CD8-positive, alpha-beta memory T cell (primary cell): ENCODE measurements at regions of chr18 and their contacts with region 1.

Region 1: GRCh38 chr18:79378542-79379250 is 17.0 kb upstream of the NFATC1 start:
- DNase-seq: peak; percentile 74 to 82 (median 76)
- H3K4me3 ChIP-seq: no peak overlapping the region
- H3K4me3 Mint-ChIP-seq: peak overlapping the region in 1 of 7 donors; percentile 15
- H3K27ac ChIP-seq: no peak overlapping the region
- H3K27ac Mint-ChIP-seq: peak overlapping the region in 7 of 8 donors; percentile 20 to 76 (median 68)
- H3K4me1 ChIP-seq: peaks cover 6% of the 10 kb centered on the region
- H3K4me1 Mint-ChIP-seq: peaks cover 9 to 10% (median 9%) of the 10 kb centered on the region in 3 donors
- H3K27me3 ChIP-seq: no peaks in the 10 kb centered on the region
- H3K27me3 Mint-ChIP-seq: peaks cover 0 to 2% of the 10 kb centered on the region in 2 donors

Region 2: DNA sequence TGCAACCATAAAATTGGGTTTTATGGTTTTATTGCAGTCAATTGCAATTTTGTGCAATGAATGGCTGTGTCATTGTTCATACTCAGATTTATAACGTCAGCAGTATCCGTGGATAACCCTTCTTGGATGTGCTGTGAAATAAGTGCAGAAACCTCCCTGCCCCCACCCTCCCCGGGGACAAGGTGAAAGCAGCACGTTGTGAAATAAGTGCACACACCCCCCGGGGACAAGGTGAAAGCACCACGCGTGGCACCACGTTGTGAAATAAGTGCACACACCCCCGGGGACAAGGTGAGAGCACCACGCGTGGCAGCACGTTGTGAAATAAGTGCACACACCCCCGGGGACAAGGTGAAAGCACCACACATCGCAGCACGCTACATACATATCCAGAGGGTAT is 76.6 kb before region 1 on chr18:
- CTCF ChIA-PET with region 1: no interaction called
- POLR2A ChIA-PET with region 1: no interaction called
- DNase-seq: no peak
- H3K4me3 ChIP-seq: no peak overlapping the region
- H3K4me3 Mint-ChIP-seq: no peak overlapping the region
- H3K27ac ChIP-seq: no peak overlapping the region
- H3K27ac Mint-ChIP-seq: no peak overlapping the region
- H3K4me1 ChIP-seq: no peaks in the 10 kb centered on the region
- H3K4me1 Mint-ChIP-seq: no peaks in the 10 kb centered on the region
- H3K27me3 ChIP-seq: no peaks in the 10 kb centered on the region
- H3K27me3 Mint-ChIP-seq: no peaks in the 10 kb centered on the region

Region 3: GRCh38 chr18:79393635-79394533 is 15.2 kb after region 1 on chr18:
- CTCF ChIA-PET with region 1: interaction called, 49 read pairs
- POLR2A ChIA-PET with region 1: no interaction called
- DNase-seq: peak in 4 of 5 donors; percentile 37 to 73 (median 44)
- H3K4me3 ChIP-seq: peak overlapping the region; percentile 55
- H3K4me3 Mint-ChIP-seq: peak overlapping the region; percentile 80 to 93 (median 86)
- H3K27ac ChIP-seq: no peak overlapping the region
- H3K27ac Mint-ChIP-seq: peak overlapping the region in 6 of 8 donors; percentile 53 to 90 (median 76)
- H3K4me1 ChIP-seq: peaks cover 20% of the 10 kb centered on the region
- H3K4me1 Mint-ChIP-seq: peaks cover 12 to 31% (median 28%) of the 10 kb centered on the region in 3 donors
- H3K27me3 ChIP-seq: peaks cover 6% of the 10 kb centered on the region
- H3K27me3 Mint-ChIP-seq: peaks cover 19% of the 10 kb centered on the region in 2 donors

Region 4: DNA sequence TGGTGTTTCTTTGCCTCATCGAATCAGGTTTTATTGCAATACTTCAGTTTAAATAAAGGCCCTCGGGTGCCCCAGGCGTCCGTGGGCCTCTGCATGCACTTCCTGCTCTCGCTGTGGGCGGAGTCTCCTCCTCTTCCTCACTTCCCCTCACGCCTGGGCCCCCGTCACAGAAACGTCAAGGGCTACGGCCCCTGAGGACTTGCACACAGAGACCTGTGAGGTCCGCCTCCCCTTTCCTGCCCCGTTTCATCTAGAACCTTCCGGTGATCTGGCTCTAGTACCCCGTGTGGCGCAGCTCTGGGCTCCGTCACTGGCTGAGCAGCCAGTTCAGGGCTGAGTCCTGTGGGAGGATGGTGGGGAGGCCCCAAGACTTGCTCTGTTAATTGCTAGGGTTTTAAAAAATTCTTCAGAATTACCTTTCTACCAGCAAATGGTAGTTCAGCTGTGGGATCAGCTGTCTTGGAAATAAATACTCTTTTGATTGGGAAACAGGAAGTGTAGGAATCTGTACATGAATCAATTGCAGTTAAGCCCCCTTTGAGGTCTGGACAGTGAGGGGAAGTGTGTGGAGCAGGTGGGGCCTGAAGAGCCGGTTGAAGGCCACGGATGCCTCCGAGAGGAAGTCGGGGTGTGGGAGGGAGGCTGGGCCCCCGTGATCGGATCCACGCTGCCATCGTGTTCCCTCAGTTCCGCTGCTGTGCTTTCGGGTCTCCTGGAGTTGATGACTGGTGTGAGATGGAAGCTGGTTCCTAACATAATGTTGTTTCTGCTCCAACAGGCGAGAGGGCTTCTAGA is 27.3 kb after region 1 on chr18:
- CTCF ChIA-PET with region 1: interaction called, 20 read pairs
- POLR2A ChIA-PET with region 1: no interaction called
- DNase-seq: peak; percentile 81 to 94 (median 90)
- H3K4me3 ChIP-seq: peak overlapping the region; percentile 59
- H3K4me3 Mint-ChIP-seq: peak overlapping the region; percentile 59 to 89 (median 79)
- H3K27ac ChIP-seq: peak overlapping the region; percentile 83
- H3K27ac Mint-ChIP-seq: peak overlapping the region; percentile 88 to 99 (median 96)
- H3K4me1 ChIP-seq: peaks cover 60% of the 10 kb centered on the region
- H3K4me1 Mint-ChIP-seq: peaks cover 46 to 58% (median 57%) of the 10 kb centered on the region in 3 donors
- H3K27me3 ChIP-seq: no peaks in the 10 kb centered on the region
- H3K27me3 Mint-ChIP-seq: no peaks in the 10 kb centered on the region

Region 5: GRCh38 chr18:79523736-79524180 is 145.1 kb after region 1 on chr18:
- CTCF ChIA-PET with region 1: interaction called, 105 read pairs
- POLR2A ChIA-PET with region 1: no interaction called
- DNase-seq: peak; percentile 59 to 90 (median 82)
- H3K4me3 ChIP-seq: peak overlapping the region; percentile 75
- H3K4me3 Mint-ChIP-seq: peak overlapping the region; percentile 62 to 93 (median 85)
- H3K27ac ChIP-seq: peak overlapping the region; percentile 43
- H3K27ac Mint-ChIP-seq: peak overlapping the region; percentile 92 to 98 (median 96)
- H3K4me1 ChIP-seq: peaks cover 61% of the 10 kb centered on the region
- H3K4me1 Mint-ChIP-seq: peaks cover 45 to 70% (median 57%) of the 10 kb centered on the region in 3 donors
- H3K27me3 ChIP-seq: no peaks in the 10 kb centered on the region
- H3K27me3 Mint-ChIP-seq: no peaks in the 10 kb centered on the region

Region 6: GRCh38 chr18:79528846-79529245 is 150.2 kb after region 1 on chr18:
- CTCF ChIA-PET with region 1: interaction called, 105 read pairs
- POLR2A ChIA-PET with region 1: no interaction called
- DNase-seq: peak; percentile 55 to 77 (median 60)
- H3K4me3 ChIP-seq: no peak overlapping the region
- H3K4me3 Mint-ChIP-seq: no peak overlapping the region
- H3K27ac ChIP-seq: no peak overlapping the region
- H3K27ac Mint-ChIP-seq: peak overlapping the region in 3 of 8 donors; percentile 42 to 71 (median 60)
- H3K4me1 ChIP-seq: peaks cover 15% of the 10 kb centered on the region
- H3K4me1 Mint-ChIP-seq: peaks cover 10 to 22% (median 13%) of the 10 kb centered on the region in 3 donors
- H3K27me3 ChIP-seq: no peaks in the 10 kb centered on the region
- H3K27me3 Mint-ChIP-seq: peaks cover 0 to 2% of the 10 kb centered on the region in 2 donors

Region 7: DNA sequence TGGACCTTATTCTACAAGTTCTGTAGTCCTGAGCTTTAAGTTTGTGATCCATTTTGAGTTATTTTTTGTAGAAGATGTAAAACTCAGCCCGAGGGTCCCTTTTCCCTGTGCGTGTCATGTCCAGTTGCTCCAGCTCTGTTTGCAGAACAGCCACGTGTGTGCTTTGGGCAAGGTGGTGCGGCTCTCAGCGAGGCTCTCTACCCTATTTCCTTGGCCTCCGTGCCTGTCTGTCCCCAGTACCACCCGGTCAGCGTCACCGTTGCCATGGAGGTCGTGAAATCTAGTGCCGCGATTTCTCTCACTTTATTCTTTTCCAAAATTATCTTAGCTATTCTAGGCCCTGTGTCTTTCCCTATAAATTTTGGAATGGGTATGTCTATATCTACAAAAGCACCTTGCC is 159.9 kb after region 1 on chr18:
- CTCF ChIA-PET with region 1: interaction called, 11 read pairs
- POLR2A ChIA-PET with region 1: no interaction called
- DNase-seq: no peak
- H3K4me3 ChIP-seq: no peak overlapping the region
- H3K4me3 Mint-ChIP-seq: no peak overlapping the region
- H3K27ac ChIP-seq: no peak overlapping the region
- H3K27ac Mint-ChIP-seq: no peak overlapping the region
- H3K4me1 ChIP-seq: no peaks in the 10 kb centered on the region
- H3K4me1 Mint-ChIP-seq: no peaks in the 10 kb centered on the region
- H3K27me3 ChIP-seq: no peaks in the 10 kb centered on the region
- H3K27me3 Mint-ChIP-seq: peaks cover 0 to 8% of the 10 kb centered on the region in 2 donors

Region 8: DNA sequence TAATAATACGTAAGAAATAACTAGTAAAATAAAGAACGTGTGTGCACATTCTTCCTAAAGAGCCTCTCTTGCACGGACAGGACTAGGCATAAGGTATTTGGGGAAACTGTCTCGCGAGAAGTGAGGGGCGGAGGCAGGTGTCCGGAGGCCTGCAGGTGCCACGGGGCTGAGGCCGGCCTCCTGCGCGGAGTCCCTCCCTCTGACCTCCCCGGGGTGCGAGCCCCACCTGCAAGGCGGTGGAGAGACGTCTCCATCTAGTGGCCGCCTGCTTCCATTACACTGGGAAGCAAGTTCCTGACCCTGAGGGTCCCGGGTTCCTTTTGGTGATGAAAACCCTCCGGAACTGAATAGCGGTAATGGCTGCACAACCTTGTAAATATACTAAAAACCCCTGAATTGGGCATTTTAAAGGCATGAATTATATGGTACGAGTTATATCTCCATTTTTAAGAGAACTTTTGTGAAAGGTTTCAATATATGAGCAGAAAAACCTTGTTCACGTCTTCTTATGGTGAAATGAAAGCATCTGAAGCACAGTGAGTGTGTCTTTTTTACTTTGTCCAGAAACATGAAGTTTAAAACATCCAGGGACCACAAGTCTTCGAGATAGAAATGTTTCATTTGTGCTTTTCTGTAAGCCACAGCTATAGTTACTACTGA is 265.4 kb after region 1 on chr18:
- CTCF ChIA-PET with region 1: interaction called, 82 read pairs
- POLR2A ChIA-PET with region 1: no interaction called
- DNase-seq: peak; percentile 44 to 79 (median 61)
- H3K4me3 ChIP-seq: no peak overlapping the region
- H3K4me3 Mint-ChIP-seq: no peak overlapping the region
- H3K27ac ChIP-seq: no peak overlapping the region
- H3K27ac Mint-ChIP-seq: no peak overlapping the region
- H3K4me1 ChIP-seq: peaks cover 7% of the 10 kb centered on the region
- H3K4me1 Mint-ChIP-seq: no peaks in the 10 kb centered on the region
- H3K27me3 ChIP-seq: no peaks in the 10 kb centered on the region
- H3K27me3 Mint-ChIP-seq: peaks cover 16 to 18% of the 10 kb centered on the region in 2 donors